ENCODE measurements at regions of chr9 and their contacts with region 1.

Region 1: GRCh38 chr9:111483862-111484571 is at the start of gene ECPAS:
- DNase-seq: peak; percentile 77
- ATAC-seq: peak; percentile 66
- H3K4me3 Mint-ChIP-seq: peak within 1 kb of the TSS; percentile 88
- H3K27ac Mint-ChIP-seq: peak within 1 kb of the TSS; percentile 86
- H3K4me1 Mint-ChIP-seq: peaks cover 26% of the 10 kb centered on the region
- H3K27me3 Mint-ChIP-seq: peaks cover 4% of the 10 kb centered on the region
- CTCF ChIP-seq: no peak
- total RNA-seq, gene ECPAS: 74.2 and 81.9 TPM in 2 replicates

Region 2: DNA sequence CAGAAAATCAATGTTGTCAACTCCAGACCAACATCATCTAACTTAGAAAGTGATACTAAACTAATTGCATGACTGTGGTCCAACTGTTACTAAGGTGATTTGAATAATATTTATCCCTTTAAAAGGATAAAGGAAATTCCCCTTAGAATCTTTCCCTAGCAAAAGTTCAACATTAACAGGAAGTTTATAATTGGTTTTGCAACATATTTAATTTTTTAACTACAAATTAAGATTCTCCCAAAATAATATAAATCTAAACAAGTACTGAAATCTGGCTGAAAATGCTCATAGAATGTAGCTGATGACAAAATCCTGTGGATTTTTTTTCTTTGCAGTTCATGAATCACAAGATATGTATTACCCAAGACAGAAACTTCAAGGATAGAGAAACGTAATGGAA is 597.2 kb before region 1 on chr9:
- CTCF ChIA-PET with region 1: no interaction called
- POLR2A ChIA-PET with region 1: no interaction called
- intact Hi-C with region 1: no loop called
- DNase-seq: no peak
- ATAC-seq: no peak
- H3K4me3 Mint-ChIP-seq: no peak overlapping the region
- H3K27ac Mint-ChIP-seq: no peak overlapping the region
- H3K4me1 Mint-ChIP-seq: no peaks in the 10 kb centered on the region
- H3K27me3 Mint-ChIP-seq: no peaks in the 10 kb centered on the region
- CTCF ChIP-seq: no peak

Region 3: GRCh38 chr9:111525056-111525977 is 41.3 kb after region 1 on chr9 and contains the start of gene ZNF483:
- CTCF ChIA-PET with region 1: no interaction called
- POLR2A ChIA-PET with region 1: interaction called, 3 read pairs
- intact Hi-C with region 1: loop called (anchors 1 kb)
- DNase-seq: peak; percentile 51
- ATAC-seq: peak; percentile 72
- H3K4me3 Mint-ChIP-seq: peak within 1 kb of the TSS; percentile 88
- H3K27ac Mint-ChIP-seq: peak within 1 kb of the TSS; percentile 60
- H3K4me1 Mint-ChIP-seq: peaks cover 16% of the 10 kb centered on the region
- H3K27me3 Mint-ChIP-seq: peaks cover 18% of the 10 kb centered on the region
- CTCF ChIP-seq: no peak
- total RNA-seq, gene ZNF483: 1.4 and 2.7 TPM in 2 replicates

Region 4: DNA sequence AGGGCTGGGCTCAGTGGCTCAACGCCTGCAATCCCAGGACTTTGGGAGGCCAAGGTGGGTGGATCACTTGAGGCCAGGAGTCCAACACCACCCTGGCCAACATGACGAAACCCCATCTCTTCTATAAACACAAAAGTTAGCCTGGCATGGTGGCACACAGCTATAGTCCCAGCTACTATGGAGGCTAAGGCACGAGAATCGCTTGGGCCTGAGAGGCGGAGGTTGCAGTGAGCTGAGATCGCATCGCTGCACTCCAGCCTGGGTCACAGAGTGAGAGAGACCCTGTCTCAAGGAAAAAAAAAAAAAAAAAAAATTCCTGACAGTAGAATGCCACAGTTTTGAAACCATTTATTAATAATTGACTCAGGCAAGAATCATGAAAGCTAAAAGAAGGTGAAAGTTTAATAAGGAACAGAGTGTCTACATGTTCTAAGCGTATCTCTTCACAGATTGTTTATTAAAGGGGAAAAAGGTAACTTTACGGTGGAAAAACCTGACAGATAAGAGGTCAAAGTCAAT is 121.1 kb after region 1 on chr9:
- CTCF ChIA-PET with region 1: no interaction called
- POLR2A ChIA-PET with region 1: no interaction called
- intact Hi-C with region 1: no loop called
- DNase-seq: no peak
- ATAC-seq: no peak
- H3K4me3 Mint-ChIP-seq: no peak overlapping the region
- H3K27ac Mint-ChIP-seq: no peak overlapping the region
- H3K4me1 Mint-ChIP-seq: no peaks in the 10 kb centered on the region
- H3K27me3 Mint-ChIP-seq: peaks cover 17% of the 10 kb centered on the region
- CTCF ChIP-seq: no peak

Region 5: GRCh38 chr9:111631071-111631971 is 147.3 kb after region 1 on chr9 and contains the start of gene DNAJC25:
- CTCF ChIA-PET with region 1: no interaction called
- POLR2A ChIA-PET with region 1: interaction called, 10 read pairs
- intact Hi-C with region 1: loop called (anchors 1 kb)
- DNase-seq: peak; percentile 91
- ATAC-seq: peak; percentile 94
- H3K4me3 Mint-ChIP-seq: peak within 1 kb of the TSS; percentile 95
- H3K27ac Mint-ChIP-seq: peak within 1 kb of the TSS; percentile 89
- H3K4me1 Mint-ChIP-seq: peaks cover 29% of the 10 kb centered on the region
- H3K27me3 Mint-ChIP-seq: no peaks in the 10 kb centered on the region
- CTCF ChIP-seq: no peak
- total RNA-seq, gene DNAJC25: 3.5 and 4.3 TPM in 2 replicates

Region 6: DNA sequence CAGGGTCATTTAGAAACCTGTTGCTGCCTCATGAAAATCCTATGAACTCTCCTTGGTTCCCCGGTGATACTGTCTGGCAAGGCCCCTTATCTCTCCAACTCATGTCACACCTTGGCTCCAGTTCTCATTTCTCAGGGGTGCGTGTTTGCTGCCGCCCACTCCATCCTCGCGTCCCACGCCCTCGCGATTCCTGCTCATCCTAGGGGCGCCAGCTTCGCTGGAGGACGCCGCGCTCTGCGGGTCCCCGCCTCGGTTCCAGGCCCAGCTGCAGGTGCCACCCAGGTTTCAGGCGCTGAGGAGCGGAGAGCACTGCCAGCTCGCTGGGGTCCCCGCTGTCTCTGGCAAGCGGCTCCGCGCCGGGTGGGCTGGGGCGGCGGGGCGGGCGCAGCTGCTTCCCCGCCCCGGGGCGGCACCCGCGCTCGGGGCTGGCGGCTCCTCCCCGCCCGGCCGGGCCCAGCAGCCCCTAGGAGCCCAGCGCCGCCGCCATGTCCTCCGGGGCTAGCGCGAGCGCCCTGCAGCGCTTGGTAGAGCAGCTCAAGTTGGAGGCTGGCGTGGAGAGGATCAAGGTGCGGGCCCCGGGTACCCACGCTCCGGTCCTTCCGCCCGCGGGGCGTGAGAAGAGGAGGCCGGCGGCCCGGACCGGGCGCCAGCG is 177.3 kb after region 1 on chr9 and contains the start of gene GNG10:
- CTCF ChIA-PET with region 1: no interaction called
- POLR2A ChIA-PET with region 1: interaction called, 3 read pairs
- intact Hi-C with region 1: loop called (anchors 10 kb)
- DNase-seq: peak; percentile 76
- ATAC-seq: peak; percentile 96
- H3K4me3 Mint-ChIP-seq: peak within 1 kb of the TSS; percentile 95
- H3K27ac Mint-ChIP-seq: peak within 1 kb of the TSS; percentile 85
- H3K4me1 Mint-ChIP-seq: peaks cover 27% of the 10 kb centered on the region
- H3K27me3 Mint-ChIP-seq: no peaks in the 10 kb centered on the region
- CTCF ChIP-seq: no peak
- total RNA-seq, gene GNG10: 9.3 and 10.2 TPM in 2 replicates

Region 7: GRCh38 chr9:112486221-112487007 is 1002.4 kb after region 1 on chr9 and contains the start of gene KIAA1958:
- CTCF ChIA-PET with region 1: no interaction called
- POLR2A ChIA-PET with region 1: interaction called, 5 read pairs
- intact Hi-C with region 1: loop called (anchors 10 kb)
- DNase-seq: peak; percentile 75
- ATAC-seq: peak; percentile 89
- H3K4me3 Mint-ChIP-seq: peak within 1 kb of the TSS; percentile 97
- H3K27ac Mint-ChIP-seq: peak within 1 kb of the TSS; percentile 89
- H3K4me1 Mint-ChIP-seq: peaks cover 19% of the 10 kb centered on the region
- H3K27me3 Mint-ChIP-seq: no peaks in the 10 kb centered on the region
- CTCF ChIP-seq: no peak
- total RNA-seq, gene KIAA1958: 5.8 and 7.4 TPM in 2 replicates

Region 8: DNA sequence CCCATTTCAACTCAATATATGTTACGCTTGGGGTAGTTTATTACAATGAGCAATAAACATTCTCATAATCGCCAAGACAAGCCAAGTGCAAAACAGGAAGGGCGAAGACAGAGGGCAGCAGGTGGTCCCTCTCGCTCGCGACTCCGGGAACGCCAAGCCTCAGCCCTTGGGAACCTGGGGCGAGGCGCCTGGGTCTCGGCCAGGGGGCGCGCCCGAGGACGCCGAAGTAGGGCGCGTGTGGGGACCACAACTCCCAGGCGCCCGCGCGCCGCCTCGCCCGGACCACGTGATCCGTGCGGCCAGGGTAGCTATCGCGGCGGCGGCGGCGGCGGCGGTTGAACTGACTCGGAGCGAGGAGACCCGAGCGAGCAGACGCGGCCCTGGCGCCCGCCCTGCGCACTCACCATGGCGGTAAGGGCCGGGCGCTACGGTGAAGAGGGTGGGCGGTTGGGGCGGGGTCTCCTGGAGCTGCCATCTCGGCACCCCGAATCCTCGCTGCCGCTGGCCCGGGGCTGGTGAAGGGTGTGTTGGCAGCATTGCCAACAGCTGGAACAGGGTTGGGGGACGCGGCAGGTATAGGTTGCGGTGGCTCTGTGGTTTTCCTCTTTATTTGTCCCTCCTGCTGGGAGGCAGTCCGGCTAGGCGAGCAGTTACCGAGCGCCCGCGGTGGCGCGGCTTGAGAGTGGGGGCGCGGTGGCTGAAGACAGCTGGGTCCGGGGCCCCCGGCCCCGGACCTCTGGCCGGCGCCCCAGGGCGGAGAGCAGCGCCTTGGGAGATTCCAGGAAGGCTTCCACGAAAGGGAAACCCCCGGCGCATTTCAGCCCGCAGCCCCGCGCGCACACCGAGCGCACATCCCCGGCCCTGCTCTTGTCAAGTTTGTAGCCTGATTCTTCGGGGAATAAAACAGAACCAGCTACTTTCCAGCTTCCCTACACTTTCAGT is 1666.9 kb after region 1 on chr9 and contains the start of gene SLC31A2:
- CTCF ChIA-PET with region 1: no interaction called
- POLR2A ChIA-PET with region 1: no interaction called
- intact Hi-C with region 1: loop called (anchors 10 kb)
- DNase-seq: peak; percentile 80
- ATAC-seq: peak; percentile 94
- H3K4me3 Mint-ChIP-seq: peak within 1 kb of the TSS; percentile 84
- H3K27ac Mint-ChIP-seq: no peak within 1 kb of the TSS
- H3K4me1 Mint-ChIP-seq: peaks cover 13% of the 10 kb centered on the region
- H3K27me3 Mint-ChIP-seq: peaks cover 2% of the 10 kb centered on the region
- CTCF ChIP-seq: no peak
- total RNA-seq, gene SLC31A2: 0.93 and 1.1 TPM in 2 replicates

Region 9: DNA sequence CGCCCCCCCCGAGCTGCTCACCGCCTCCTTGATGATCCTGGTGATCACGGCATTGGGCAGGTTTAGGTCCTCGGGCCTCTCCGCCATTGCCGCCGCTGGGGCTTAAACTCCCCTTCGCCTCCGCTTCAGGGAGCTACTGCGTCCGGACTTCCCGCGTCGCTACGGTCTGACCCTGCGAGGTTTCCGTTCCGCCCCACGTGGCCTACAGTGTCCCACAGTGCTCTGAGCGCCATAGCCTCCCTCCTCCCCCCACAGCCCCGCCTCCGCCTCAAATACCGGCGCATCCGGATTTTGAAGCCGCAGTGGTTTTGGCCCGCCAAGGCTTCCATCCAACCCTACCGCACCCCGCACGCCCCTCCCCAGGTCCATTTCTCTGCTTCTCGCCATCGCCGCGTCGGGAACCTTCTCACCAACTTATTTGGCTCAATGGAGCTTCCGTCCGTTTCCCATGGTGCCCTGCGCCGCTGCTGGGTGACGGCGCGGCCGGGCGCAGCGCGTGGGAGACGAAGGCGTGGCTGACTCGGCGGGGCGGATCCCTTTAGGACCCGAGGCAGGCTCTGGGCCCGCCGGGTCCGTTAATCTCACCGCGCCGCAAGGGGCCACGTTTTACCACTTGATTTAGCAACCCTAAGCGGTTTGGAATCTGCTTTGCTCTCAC is 1926.3 kb after region 1 on chr9 and contains the starts of genes C9orf43 and POLE3:
- CTCF ChIA-PET with region 1: no interaction called
- POLR2A ChIA-PET with region 1: no interaction called
- intact Hi-C with region 1: loop called (anchors 2 kb)
- DNase-seq: peak; percentile 94
- ATAC-seq: peak; percentile 89
- H3K4me3 Mint-ChIP-seq: peak within 1 kb of the TSS; percentile 98
- H3K27ac Mint-ChIP-seq: peak within 1 kb of the TSS; percentile 99
- H3K4me1 Mint-ChIP-seq: peaks cover 31% of the 10 kb centered on the region
- H3K27me3 Mint-ChIP-seq: no peaks in the 10 kb centered on the region
- CTCF ChIP-seq: no peak
- total RNA-seq, gene C9orf43: 0.76 and 1.2 TPM in 2 replicates
- total RNA-seq, gene POLE3: 48.0 and 55.5 TPM in 2 replicates

Measured in activated B cell treated with CpG ODN at 0.5 μM for 24 hours (primary cell).